CD8-positive, alpha-beta memory T cell (primary cell): ENCODE measurements at regions of chr1 and their contacts with region 1.

Region 1: GRCh38 chr1:156445789-156446263 is 54.7 kb downstream of the MEF2D start:
- DNase-seq: peak; percentile 62 to 85 (median 73)
- H3K4me3 ChIP-seq: no peak overlapping the region
- H3K4me3 Mint-ChIP-seq: no peak overlapping the region
- H3K27ac ChIP-seq: no peak overlapping the region
- H3K27ac Mint-ChIP-seq: peak overlapping the region in 1 of 8 donors; percentile 19
- H3K4me1 ChIP-seq: peaks cover 6% of the 10 kb centered on the region
- H3K4me1 Mint-ChIP-seq: peaks cover 4 to 6% (median 6%) of the 10 kb centered on the region in 3 donors
- H3K27me3 ChIP-seq: peaks cover 30% of the 10 kb centered on the region
- H3K27me3 Mint-ChIP-seq: peaks cover 37 to 64% of the 10 kb centered on the region in 2 donors

Region 2: DNA sequence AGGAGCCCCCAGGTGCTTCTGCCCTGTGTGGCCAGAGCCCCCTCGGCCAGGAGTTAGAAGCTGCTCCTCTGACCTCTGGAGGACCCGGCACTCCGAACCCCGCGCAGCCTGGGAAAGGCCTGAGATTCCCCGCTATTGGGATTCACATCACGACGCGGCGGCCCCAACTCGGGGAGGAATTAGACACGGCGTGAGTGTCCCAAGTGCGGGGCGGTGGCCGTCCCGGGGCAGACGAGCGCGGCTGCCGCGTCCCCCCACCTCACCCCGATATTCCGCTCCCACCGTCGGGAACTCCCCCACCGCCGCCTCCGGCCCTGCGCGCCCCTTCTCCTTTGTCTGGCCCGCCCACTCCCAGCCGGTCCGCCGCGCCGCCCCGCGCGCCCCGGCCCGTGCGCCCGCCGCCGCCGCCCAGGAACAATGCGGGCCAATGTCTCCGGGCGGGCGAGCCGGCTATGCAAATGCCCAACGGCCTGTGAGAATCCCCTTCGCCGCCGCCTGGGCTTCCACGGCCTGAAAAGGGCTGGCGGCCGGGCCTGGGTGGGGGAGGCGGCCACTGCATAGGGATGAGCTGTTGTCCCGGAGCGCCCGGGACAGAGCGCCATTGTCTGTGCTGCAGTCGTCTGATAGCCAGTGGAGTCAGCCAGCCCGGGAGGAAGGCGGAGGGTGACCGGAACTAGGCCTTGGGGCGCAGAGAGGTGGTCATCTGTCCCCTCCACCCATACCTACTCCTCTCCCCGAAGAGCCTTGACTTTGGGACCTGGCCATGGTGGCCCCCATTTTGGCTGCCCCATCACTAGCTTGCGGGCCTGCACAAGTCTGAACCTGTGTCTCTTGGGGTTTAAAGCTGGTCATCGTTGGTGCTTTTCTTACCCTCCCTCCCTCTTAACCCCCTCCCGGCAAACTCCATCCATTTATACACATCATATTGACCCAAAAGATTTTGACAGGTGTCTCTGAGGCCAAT is 57.4 kb before region 1 on chr1:
- CTCF ChIA-PET with region 1: interaction called, 185 read pairs
- POLR2A ChIA-PET with region 1: interaction called, 10 read pairs
- DNase-seq: no peak
- H3K4me3 ChIP-seq: no peak overlapping the region
- H3K4me3 Mint-ChIP-seq: no peak overlapping the region
- H3K27ac ChIP-seq: no peak overlapping the region
- H3K27ac Mint-ChIP-seq: no peak overlapping the region
- H3K4me1 ChIP-seq: peaks cover 6% of the 10 kb centered on the region
- H3K4me1 Mint-ChIP-seq: peaks cover 6 to 10% (median 7%) of the 10 kb centered on the region in 3 donors
- H3K27me3 ChIP-seq: no peaks in the 10 kb centered on the region
- H3K27me3 Mint-ChIP-seq: peaks cover 26 to 43% of the 10 kb centered on the region in 2 donors

Region 3: DNA sequence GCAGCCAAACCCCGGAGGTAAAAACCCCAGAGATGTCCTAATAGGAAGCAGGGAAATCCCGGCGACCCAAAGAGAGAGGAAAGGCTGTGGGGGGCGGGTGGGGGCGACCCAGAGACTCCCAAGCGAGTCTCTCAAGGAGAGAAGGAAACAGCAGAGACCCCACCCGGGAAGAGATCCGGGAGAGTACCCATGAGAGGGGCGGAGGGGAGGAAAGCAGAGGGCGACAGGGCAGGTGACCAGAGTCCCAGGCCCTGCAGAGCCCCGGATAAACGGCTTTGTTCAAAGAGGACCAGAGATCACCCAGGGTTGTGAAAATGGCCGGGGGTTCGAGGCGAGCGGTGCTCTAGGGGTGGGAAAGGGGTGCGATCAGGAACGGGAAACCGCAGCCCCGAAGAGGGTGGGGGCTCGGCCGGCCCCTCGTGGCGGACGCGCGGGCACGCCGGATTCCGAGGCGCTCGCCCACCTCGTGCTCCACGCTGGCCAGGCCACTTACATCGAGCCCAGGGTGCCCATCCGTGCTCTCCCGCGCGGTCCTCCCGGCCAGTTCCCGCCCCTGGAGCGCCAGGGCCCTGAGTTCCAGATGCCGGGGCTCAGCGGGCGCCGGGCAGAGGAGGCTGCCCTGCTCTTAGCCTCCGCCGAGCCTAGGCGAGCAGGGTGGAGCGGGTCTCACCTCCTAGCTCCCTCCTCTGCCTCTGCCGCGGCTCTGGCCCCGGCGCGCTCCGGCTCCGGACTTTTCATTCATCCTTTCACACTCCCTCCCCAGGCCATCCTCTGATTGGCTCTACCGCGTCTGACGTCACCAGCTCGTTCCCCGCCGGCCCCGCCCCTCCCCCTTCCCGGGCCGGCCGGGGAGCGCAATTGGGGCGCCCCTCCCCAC is 24.5 kb before region 1 on chr1:
- CTCF ChIA-PET with region 1: interaction called, 35 read pairs
- POLR2A ChIA-PET with region 1: no interaction called
- DNase-seq: peak; percentile 54 to 74 (median 63)
- H3K4me3 ChIP-seq: peak overlapping the region; percentile 62
- H3K4me3 Mint-ChIP-seq: peak overlapping the region; percentile 91 to 97 (median 93)
- H3K27ac ChIP-seq: peak overlapping the region; percentile 68
- H3K27ac Mint-ChIP-seq: peak overlapping the region in 6 of 8 donors; percentile 9 to 92 (median 72)
- H3K4me1 ChIP-seq: peaks cover 25% of the 10 kb centered on the region
- H3K4me1 Mint-ChIP-seq: peaks cover 23 to 35% (median 26%) of the 10 kb centered on the region in 3 donors
- H3K27me3 ChIP-seq: peaks cover 46% of the 10 kb centered on the region
- H3K27me3 Mint-ChIP-seq: peaks cover 15 to 75% of the 10 kb centered on the region in 2 donors

Region 4: DNA sequence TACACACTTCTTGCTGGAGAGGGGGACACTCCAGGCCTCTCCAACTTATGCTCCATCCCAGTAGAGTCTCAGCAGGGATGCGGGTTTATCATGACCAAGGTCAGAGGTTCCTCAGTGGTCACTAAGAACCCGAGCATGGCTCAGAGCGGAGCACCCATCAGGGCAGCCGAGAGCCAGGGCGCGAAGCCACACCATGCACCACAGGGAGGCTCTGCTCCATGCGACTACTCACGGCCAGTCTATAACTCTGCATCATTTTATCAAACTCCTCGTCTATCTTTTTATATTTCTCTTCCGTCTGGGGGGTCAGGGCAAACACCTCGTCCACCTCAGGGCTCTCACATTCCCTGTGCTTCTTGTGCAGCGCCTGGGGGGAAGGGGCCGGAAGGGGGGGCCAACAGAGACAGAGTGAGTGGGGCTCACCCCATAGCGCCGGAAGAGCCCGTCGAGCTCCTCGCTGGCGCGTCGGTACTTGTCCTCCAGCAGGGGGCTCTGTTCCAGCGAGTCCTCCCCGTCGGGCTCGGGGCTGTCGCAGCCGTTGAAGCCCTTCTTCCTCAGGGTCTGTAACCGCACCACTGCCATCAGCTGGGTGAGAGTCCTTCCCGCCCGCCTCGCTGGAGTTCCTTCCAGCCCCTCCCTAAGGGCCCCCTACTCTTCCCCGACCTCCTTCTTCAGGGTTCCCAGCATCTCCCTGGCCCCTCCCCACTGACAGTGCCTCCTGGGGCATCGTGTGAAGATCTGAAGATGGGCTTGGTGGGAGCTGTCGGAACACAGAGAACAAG is 34.8 kb after region 1 on chr1:
- CTCF ChIA-PET with region 1: interaction called, 12 read pairs
- POLR2A ChIA-PET with region 1: no interaction called
- DNase-seq: peak; percentile 74 to 88 (median 76)
- H3K4me3 ChIP-seq: peak overlapping the region; percentile 19
- H3K4me3 Mint-ChIP-seq: peak overlapping the region in 6 of 7 donors; percentile 28 to 76 (median 50)
- H3K27ac ChIP-seq: peak overlapping the region; percentile 21
- H3K27ac Mint-ChIP-seq: peak overlapping the region; percentile 40 to 96 (median 92)
- H3K4me1 ChIP-seq: peaks cover 34% of the 10 kb centered on the region
- H3K4me1 Mint-ChIP-seq: peaks cover 43 to 62% (median 55%) of the 10 kb centered on the region in 3 donors
- H3K27me3 ChIP-seq: no peaks in the 10 kb centered on the region
- H3K27me3 Mint-ChIP-seq: no peaks in the 10 kb centered on the region

Region 5: DNA sequence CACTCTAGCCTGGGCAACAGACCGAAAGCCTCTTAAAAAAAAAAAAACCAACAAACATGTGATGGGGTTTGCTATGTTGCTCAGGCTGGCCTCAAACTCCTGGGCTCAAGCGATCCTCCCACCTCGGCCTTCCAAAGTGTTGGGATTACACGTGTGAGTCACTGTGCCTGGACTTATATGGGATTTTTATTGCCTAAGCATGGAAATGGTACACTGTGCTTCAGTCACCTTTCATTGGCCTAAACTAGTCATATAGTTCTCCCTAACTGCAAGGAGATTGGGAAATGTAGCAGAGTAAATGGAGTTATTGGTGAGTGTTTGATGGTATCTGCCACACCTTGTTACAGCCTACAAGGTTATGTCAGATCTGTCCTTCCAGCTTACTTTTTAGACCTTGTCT is 71.9 kb after region 1 on chr1:
- CTCF ChIA-PET with region 1: no interaction called
- POLR2A ChIA-PET with region 1: no interaction called
- DNase-seq: no peak
- H3K4me3 ChIP-seq: no peak overlapping the region
- H3K4me3 Mint-ChIP-seq: no peak overlapping the region
- H3K27ac ChIP-seq: no peak overlapping the region
- H3K27ac Mint-ChIP-seq: peak overlapping the region in 1 of 8 donors; percentile 44
- H3K4me1 ChIP-seq: no peaks in the 10 kb centered on the region
- H3K4me1 Mint-ChIP-seq: no peaks in the 10 kb centered on the region
- H3K27me3 ChIP-seq: no peaks in the 10 kb centered on the region
- H3K27me3 Mint-ChIP-seq: peaks cover 0 to 2% of the 10 kb centered on the region in 2 donors

Region 6: GRCh38 chr1:156601122-156601830 is 155.4 kb after region 1 on chr1 and contains the start of gene GPATCH4:
- CTCF ChIA-PET with region 1: interaction called, 11 read pairs
- POLR2A ChIA-PET with region 1: no interaction called
- DNase-seq: peak; percentile 58 to 81 (median 70)
- H3K4me3 ChIP-seq: peak within 1 kb of the TSS; percentile 97
- H3K4me3 Mint-ChIP-seq: peak within 1 kb of the TSS; percentile 84 to 100 (median 95)
- H3K27ac ChIP-seq: peak within 1 kb of the TSS; percentile 68
- H3K27ac Mint-ChIP-seq: peak within 1 kb of the TSS; percentile 72 to 100 (median 98)
- H3K4me1 ChIP-seq: peaks cover 32% of the 10 kb centered on the region
- H3K4me1 Mint-ChIP-seq: peaks cover 34 to 36% (median 35%) of the 10 kb centered on the region in 3 donors
- H3K27me3 ChIP-seq: no peaks in the 10 kb centered on the region
- H3K27me3 Mint-ChIP-seq: no peaks in the 10 kb centered on the region
- total RNA-seq, gene GPATCH4: 123 to 131 TPM